AG04449 (cell line): ENCODE measurements at regions of chr2 and their contacts with region 1.

Region 1: GRCh38 chr2:33475224-33476130 is 972 bp upstream of the RASGRP3 start:
- DNase-seq: peak; percentile 23
- H3K4me3 ChIP-seq: peak overlapping the region; percentile 75
- CTCF ChIP-seq: peak; percentile 91

Region 2: DNA sequence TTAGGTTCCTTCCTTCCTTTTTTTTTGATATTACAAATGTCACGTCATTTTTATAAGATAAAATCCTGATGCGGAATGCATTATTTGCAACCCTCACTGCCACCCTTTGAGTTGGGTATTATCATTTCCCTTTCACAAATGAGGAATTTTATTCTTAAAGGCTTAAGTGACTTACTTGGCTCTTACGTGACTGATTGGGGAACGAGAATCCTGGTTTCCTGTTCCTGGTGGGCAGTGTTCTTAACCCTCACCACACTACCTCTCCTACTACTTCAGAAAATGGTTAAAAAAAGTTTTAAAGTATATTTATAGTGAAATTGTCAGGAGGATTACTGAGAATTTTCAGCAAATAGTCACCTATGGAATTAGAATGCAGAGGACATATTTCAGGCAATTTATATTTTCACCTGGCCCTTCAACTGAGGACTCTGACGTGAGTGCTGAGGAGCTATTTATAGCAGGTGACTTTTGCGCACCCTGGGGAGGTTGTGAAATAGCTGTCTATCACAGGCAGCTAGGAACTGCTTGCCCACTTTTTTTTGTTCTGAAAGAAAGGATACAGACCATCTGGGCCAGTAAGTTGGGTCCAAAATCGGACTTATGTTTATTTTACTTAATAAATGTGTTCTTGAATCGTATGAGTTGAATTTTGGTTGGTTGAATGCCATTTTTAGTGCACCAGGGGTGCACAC is 17.8 kb before region 1 on chr2:
- CTCF ChIA-PET with region 1: interaction called, 26 read pairs
- POLR2A ChIA-PET with region 1: interaction called, 3 read pairs
- DNase-seq: no peak
- H3K4me3 ChIP-seq: no peak overlapping the region
- CTCF ChIP-seq: no peak

Region 3: GRCh38 chr2:33488715-33489540 is 13.5 kb after region 1 on chr2:
- CTCF ChIA-PET with region 1: interaction called, 26 read pairs
- POLR2A ChIA-PET with region 1: no interaction called
- DNase-seq: no peak
- H3K4me3 ChIP-seq: no peak overlapping the region
- CTCF ChIP-seq: no peak

Region 4: GRCh38 chr2:33577668-33578067 is 102.2 kb after region 1 on chr2:
- CTCF ChIA-PET with region 1: interaction called, 25 read pairs
- POLR2A ChIA-PET with region 1: no interaction called
- DNase-seq: no peak
- H3K4me3 ChIP-seq: no peak overlapping the region
- CTCF ChIP-seq: no peak